WTC11 (cell line): ENCODE measurements at regions of chrX and their contacts with region 1.

Region 1: DNA sequence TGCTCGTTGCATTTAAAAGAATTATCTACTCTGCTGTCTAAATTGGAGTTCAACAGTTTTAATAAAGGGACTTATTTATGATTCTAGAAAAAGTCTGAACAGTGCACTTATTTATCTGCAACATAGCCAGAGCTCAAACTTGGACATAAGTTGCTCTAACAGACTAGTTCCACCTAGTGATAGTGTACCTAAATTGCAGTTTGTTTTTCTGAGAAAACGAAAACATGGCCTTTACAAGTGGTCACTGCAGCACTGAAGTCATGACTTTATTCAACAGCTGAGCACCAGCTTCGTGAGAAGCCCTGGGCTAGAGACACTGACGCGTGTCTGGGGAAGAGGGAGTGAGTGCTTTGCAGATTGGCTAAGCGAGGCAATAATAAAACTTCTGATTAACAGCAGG is 77.3 kb upstream of the IGSF1 start:
- DNase-seq: no peak
- ATAC-seq: peak; percentile 38; the same call in 1 of the 2 replicates
- H3K4me3 Mint-ChIP-seq: no peak overlapping the region
- H3K27ac Mint-ChIP-seq: peak overlapping the region; percentile 66; the same call in 1 of the 2 replicates
- H3K4me1 Mint-ChIP-seq: peaks cover 54% of the 10 kb centered on the region
- H3K27me3 Mint-ChIP-seq: no peaks in the 10 kb centered on the region
- CTCF ChIP-seq: no peak

Region 2: GRCh38 chrX:131288738-131289511 is 77.5 kb before region 1 on chrX and contains the start of gene IGSF1:
- CTCF ChIA-PET with region 1: interaction called, 10 read pairs
- POLR2A ChIA-PET with region 1: no interaction called
- DNase-seq: peak; percentile 82
- ATAC-seq: peak; percentile 98
- H3K4me3 Mint-ChIP-seq: peak within 1 kb of the TSS; percentile 86
- H3K27ac Mint-ChIP-seq: peak within 1 kb of the TSS; percentile 82
- H3K4me1 Mint-ChIP-seq: peaks cover 50% of the 10 kb centered on the region
- H3K27me3 Mint-ChIP-seq: no peaks in the 10 kb centered on the region
- CTCF ChIP-seq: no peak
- total RNA-seq, gene IGSF1: 16.2 to 23.6 TPM (median 19.1 TPM) in 3 replicates